ENCODE measurements at regions of chrX and their contacts with region 1.

Region 1: DNA sequence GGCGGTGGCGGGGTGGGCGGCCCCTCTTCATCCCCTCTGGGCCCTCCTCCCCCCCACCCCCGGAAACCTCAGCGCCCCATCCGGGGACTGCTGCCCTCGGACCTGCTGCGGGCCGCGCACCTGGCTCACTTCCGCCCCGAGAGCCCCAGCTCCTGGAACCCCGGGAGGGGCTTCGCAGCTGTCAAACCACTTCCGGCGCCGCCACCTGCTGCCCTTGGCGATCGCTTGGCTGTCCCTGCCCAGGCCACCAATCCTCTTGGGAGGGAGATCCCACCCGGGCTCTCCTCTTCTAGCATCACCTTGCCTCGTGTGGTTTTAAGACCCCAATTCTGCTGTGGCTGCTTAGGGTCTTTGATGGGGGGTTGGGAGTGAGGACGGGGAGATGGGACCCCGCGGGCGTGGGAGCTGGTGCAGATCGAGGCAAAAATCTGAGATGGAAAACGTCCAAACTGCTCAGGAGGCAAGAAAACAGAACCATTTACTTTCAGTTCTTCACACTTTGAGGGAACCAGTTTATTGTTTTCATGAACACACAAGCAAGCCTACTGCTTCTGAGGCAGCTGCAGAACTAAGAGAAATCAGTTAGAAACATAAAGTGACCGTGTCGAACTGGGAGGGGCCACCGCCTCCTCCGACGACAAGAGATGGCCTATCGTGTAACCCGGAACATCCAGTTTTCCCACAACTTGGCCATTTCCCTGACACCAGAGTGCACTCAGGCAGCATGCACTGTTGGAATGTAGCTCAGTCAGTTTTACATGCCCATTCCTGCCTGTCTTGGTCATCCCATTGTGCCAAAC is 779 bp downstream of the MTMR1 start:
- DNase-seq: peak; percentile 87
- ATAC-seq: peak; percentile 65
- H3K4me3 ChIP-seq: peak overlapping the region; percentile 28 to 65 (median 57)
- H3K4me3 Mint-ChIP-seq: peak overlapping the region; percentile 98
- H3K27ac ChIP-seq: peak overlapping the region; percentile 87 to 89
- H3K27ac Mint-ChIP-seq: peak overlapping the region; percentile 100
- H3K4me1 ChIP-seq: peaks cover 53 to 67% of the 10 kb centered on the region in 2 donors
- H3K4me1 Mint-ChIP-seq: peaks cover 62% of the 10 kb centered on the region
- H3K27me3 ChIP-seq: no peaks in the 10 kb centered on the region
- H3K27me3 Mint-ChIP-seq: no peaks in the 10 kb centered on the region
- CTCF ChIP-seq: no peak

Region 2: GRCh38 chrX:149938427-149939270 is 755.3 kb before region 1 on chrX and contains the start of gene EOLA2:
- CTCF ChIA-PET with region 1: no interaction called
- POLR2A ChIA-PET with region 1: interaction called, 13 read pairs
- intact Hi-C with region 1: no loop called
- DNase-seq: peak; percentile 97
- ATAC-seq: peak; percentile 51
- H3K4me3 ChIP-seq: peak within 1 kb of the TSS; percentile 30 to 86 (median 72)
- H3K4me3 Mint-ChIP-seq: peak within 1 kb of the TSS; percentile 93
- H3K27ac ChIP-seq: peak within 1 kb of the TSS; percentile 94 to 98
- H3K27ac Mint-ChIP-seq: peak within 1 kb of the TSS; percentile 99
- H3K4me1 ChIP-seq: peaks cover 5 to 12% of the 10 kb centered on the region in 2 donors
- H3K4me1 Mint-ChIP-seq: peaks cover 4% of the 10 kb centered on the region
- H3K27me3 ChIP-seq: no peaks in the 10 kb centered on the region
- H3K27me3 Mint-ChIP-seq: no peaks in the 10 kb centered on the region
- CTCF ChIP-seq: peak; percentile 22
- total RNA-seq, gene EOLA2: 37.7 and 42.0 TPM in 2 replicates

Region 3: DNA sequence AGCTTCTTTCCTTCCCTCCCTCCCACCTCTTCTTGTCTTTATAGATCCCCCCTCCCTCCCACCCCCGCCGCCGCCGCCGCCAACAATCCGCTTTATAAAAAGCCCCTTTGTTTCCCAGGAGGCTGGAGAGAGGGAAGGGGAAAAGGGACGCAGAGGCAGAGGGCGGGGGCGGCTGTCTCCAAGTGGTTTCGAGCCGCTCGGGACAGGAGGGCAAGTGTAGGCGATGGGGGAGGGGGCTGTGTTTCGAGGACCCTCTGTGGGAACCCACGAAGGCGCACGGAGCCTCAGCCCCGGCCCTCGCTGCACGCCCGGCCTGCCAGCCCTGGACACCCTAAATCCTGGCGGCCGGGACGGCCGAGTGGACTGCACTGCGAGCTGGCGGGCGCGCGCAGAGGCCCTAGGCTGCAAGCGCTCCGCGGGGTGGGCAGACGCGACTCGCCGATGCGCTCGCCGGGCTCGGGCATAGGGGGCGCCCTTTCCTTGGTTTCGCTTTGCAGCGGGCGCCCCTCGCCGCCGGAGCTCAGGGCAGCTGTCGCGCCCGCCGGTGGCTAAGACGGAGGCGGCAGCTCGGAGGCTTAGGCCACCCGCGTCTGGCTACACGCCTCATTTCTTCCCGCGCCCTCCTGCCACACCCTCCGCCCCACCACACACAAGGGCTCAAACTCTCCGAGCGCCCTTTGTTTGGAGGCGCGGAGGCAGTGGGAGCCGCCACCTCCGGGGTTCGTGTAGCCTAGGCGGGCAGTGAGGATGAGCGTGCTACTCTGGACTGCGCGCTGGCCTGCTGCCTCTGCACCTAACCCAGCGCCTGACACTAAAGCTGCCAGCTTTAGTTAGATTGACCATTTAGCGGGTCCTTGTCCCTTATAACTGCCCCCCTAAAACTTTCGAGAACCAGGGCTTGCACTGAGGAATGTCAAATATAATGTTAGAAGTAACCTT is 328.7 kb before region 1 on chrX:
- CTCF ChIA-PET with region 1: no interaction called
- POLR2A ChIA-PET with region 1: no interaction called
- intact Hi-C with region 1: loop called (anchors 5 kb)
- DNase-seq: peak; percentile 58
- ATAC-seq: peak; percentile 12
- H3K4me3 ChIP-seq: peak overlapping the region; percentile 39 to 62 (median 59)
- H3K4me3 Mint-ChIP-seq: peak overlapping the region; percentile 86
- H3K27ac ChIP-seq: no peak overlapping the region
- H3K27ac Mint-ChIP-seq: peak overlapping the region; percentile 20
- H3K4me1 ChIP-seq: peaks cover 17 to 43% of the 10 kb centered on the region in 2 donors
- H3K4me1 Mint-ChIP-seq: peaks cover 31% of the 10 kb centered on the region
- H3K27me3 ChIP-seq: peaks cover 0 to 9% (median 5%) of the 10 kb centered on the region in 4 experiments
- H3K27me3 Mint-ChIP-seq: peaks cover 10% of the 10 kb centered on the region
- CTCF ChIP-seq: peak; percentile 41

Region 4: GRCh38 chrX:150568320-150569154 is 125.4 kb before region 1 on chrX and contains the start of gene MTM1:
- CTCF ChIA-PET with region 1: no interaction called
- POLR2A ChIA-PET with region 1: interaction called, 4 read pairs
- intact Hi-C with region 1: loop called (anchors 1 kb)
- DNase-seq: peak; percentile 93
- ATAC-seq: peak; percentile 90
- H3K4me3 ChIP-seq: peak within 1 kb of the TSS; percentile 35 to 77 (median 75)
- H3K4me3 Mint-ChIP-seq: peak within 1 kb of the TSS; percentile 93
- H3K27ac ChIP-seq: peak within 1 kb of the TSS; percentile 80 to 84
- H3K27ac Mint-ChIP-seq: peak within 1 kb of the TSS; percentile 95
- H3K4me1 ChIP-seq: peaks cover 40 to 44% of the 10 kb centered on the region in 2 donors
- H3K4me1 Mint-ChIP-seq: peaks cover 45% of the 10 kb centered on the region
- H3K27me3 ChIP-seq: no peaks in the 10 kb centered on the region
- H3K27me3 Mint-ChIP-seq: no peaks in the 10 kb centered on the region
- CTCF ChIP-seq: no peak
- total RNA-seq, gene MTM1: 24.2 and 29.8 TPM in 2 replicates

Region 5: GRCh38 chrX:150683536-150684146 is 10.3 kb before region 1 on chrX:
- CTCF ChIA-PET with region 1: interaction called, 29 read pairs
- POLR2A ChIA-PET with region 1: interaction called, 5 read pairs
- intact Hi-C with region 1: loop called (anchors 2 kb)
- DNase-seq: peak; percentile 69
- ATAC-seq: peak; percentile 39
- H3K4me3 ChIP-seq: no peak overlapping the region
- H3K4me3 Mint-ChIP-seq: no peak overlapping the region
- H3K27ac ChIP-seq: no peak overlapping the region
- H3K27ac Mint-ChIP-seq: no peak overlapping the region
- H3K4me1 ChIP-seq: peaks cover under 1 to 8% of the 10 kb centered on the region in 2 donors
- H3K4me1 Mint-ChIP-seq: peaks cover 7% of the 10 kb centered on the region
- H3K27me3 ChIP-seq: no peaks in the 10 kb centered on the region
- H3K27me3 Mint-ChIP-seq: no peaks in the 10 kb centered on the region
- CTCF ChIP-seq: peak; percentile 70

Region 6: GRCh38 chrX:150715184-150715583 is 21.2 kb after region 1 on chrX:
- CTCF ChIA-PET with region 1: interaction called, 49 read pairs
- POLR2A ChIA-PET with region 1: interaction called, 5 read pairs
- intact Hi-C with region 1: loop called (anchors 2 kb)
- DNase-seq: no peak
- ATAC-seq: no peak
- H3K4me3 ChIP-seq: no peak overlapping the region
- H3K4me3 Mint-ChIP-seq: no peak overlapping the region
- H3K27ac ChIP-seq: no peak overlapping the region
- H3K27ac Mint-ChIP-seq: peak overlapping the region; percentile 50
- H3K4me1 ChIP-seq: peaks cover 11 to 17% of the 10 kb centered on the region in 2 donors
- H3K4me1 Mint-ChIP-seq: peaks cover 34% of the 10 kb centered on the region
- H3K27me3 ChIP-seq: no peaks in the 10 kb centered on the region
- H3K27me3 Mint-ChIP-seq: no peaks in the 10 kb centered on the region
- CTCF ChIP-seq: no peak

Region 7: GRCh38 chrX:150736475-150736874 is 42.5 kb after region 1 on chrX:
- CTCF ChIA-PET with region 1: interaction called, 3 read pairs
- POLR2A ChIA-PET with region 1: interaction called, 3 read pairs
- intact Hi-C with region 1: loop called (anchors 5 kb)
- DNase-seq: peak; percentile 69
- ATAC-seq: peak; percentile 82
- H3K4me3 ChIP-seq: peak overlapping the region in 3 of 5 experiments; percentile 14 to 46 (median 28)
- H3K4me3 Mint-ChIP-seq: peak overlapping the region; percentile 80
- H3K27ac ChIP-seq: peak overlapping the region; percentile 87 to 91
- H3K27ac Mint-ChIP-seq: peak overlapping the region; percentile 94
- H3K4me1 ChIP-seq: peaks cover 15 to 18% of the 10 kb centered on the region in 2 donors
- H3K4me1 Mint-ChIP-seq: peaks cover 29% of the 10 kb centered on the region
- H3K27me3 ChIP-seq: no peaks in the 10 kb centered on the region
- H3K27me3 Mint-ChIP-seq: no peaks in the 10 kb centered on the region
- CTCF ChIP-seq: no peak

Region 8: GRCh38 chrX:151088221-151088620 is 394.2 kb after region 1 on chrX:
- CTCF ChIA-PET with region 1: no interaction called
- POLR2A ChIA-PET with region 1: no interaction called
- intact Hi-C with region 1: no loop called
- DNase-seq: no peak
- ATAC-seq: no peak
- H3K4me3 ChIP-seq: no peak overlapping the region
- H3K4me3 Mint-ChIP-seq: no peak overlapping the region
- H3K27ac ChIP-seq: no peak overlapping the region
- H3K27ac Mint-ChIP-seq: no peak overlapping the region
- H3K4me1 ChIP-seq: no peaks in the 10 kb centered on the region
- H3K4me1 Mint-ChIP-seq: no peaks in the 10 kb centered on the region
- H3K27me3 ChIP-seq: no peaks in the 10 kb centered on the region
- H3K27me3 Mint-ChIP-seq: peaks cover 15% of the 10 kb centered on the region
- CTCF ChIP-seq: no peak

Region 9: GRCh38 chrX:151680805-151681204 is 986.8 kb after region 1 on chrX:
- CTCF ChIA-PET with region 1: no interaction called
- POLR2A ChIA-PET with region 1: no interaction called
- intact Hi-C with region 1: no loop called
- DNase-seq: peak; percentile 31
- ATAC-seq: no peak
- H3K4me3 ChIP-seq: no peak overlapping the region
- H3K4me3 Mint-ChIP-seq: no peak overlapping the region
- H3K27ac ChIP-seq: no peak overlapping the region
- H3K27ac Mint-ChIP-seq: no peak overlapping the region
- H3K4me1 ChIP-seq: no peaks in the 10 kb centered on the region
- H3K4me1 Mint-ChIP-seq: no peaks in the 10 kb centered on the region
- H3K27me3 ChIP-seq: peaks cover 0 to 3% (median 0%) of the 10 kb centered on the region in 4 experiments
- H3K27me3 Mint-ChIP-seq: peaks cover 4% of the 10 kb centered on the region
- CTCF ChIP-seq: peak; percentile 33